PC-9 (cell line): ENCODE measurements at regions of chr2 and their contacts with region 1.

Region 1: GRCh38 chr2:199716807-199717586 is 134.0 kb downstream of the FTCDNL1 start:
- DNase-seq: peak; percentile 43 to 51
- H3K4me3 ChIP-seq: peak overlapping the region; percentile 25; the same call in 1 of the 2 replicates
- H3K27ac ChIP-seq: peak overlapping the region; percentile 72
- H3K4me1 ChIP-seq: peaks cover 19% of the 10 kb centered on the region
- H3K27me3 ChIP-seq: no peaks in the 10 kb centered on the region
- CTCF ChIP-seq: no peak

Region 2: DNA sequence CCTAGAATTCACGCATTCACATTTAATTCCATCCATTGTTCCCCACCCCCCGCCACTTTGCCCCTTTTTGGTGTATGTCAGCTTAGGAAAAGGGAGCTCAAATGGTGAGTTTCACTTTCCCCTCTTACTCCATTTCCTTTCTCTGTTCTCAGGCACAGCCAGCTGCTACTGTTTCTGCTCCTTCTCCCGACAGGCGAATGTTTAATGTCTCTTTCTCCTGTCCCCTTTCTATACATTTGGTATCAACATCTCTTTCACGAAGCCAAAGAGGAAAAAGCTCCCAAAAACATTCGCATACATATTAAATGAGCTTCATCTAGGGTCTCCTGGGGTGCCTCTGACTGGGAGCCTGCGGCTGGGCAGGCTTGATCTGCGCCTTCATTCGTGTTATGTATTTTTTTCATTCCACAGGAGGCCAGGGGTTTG is 135.0 kb before region 1 on chr2:
- CTCF ChIA-PET with region 1: no interaction called
- POLR2A ChIA-PET with region 1: no interaction called
- intact Hi-C with region 1: no loop called
- DNase-seq: no peak
- H3K4me3 ChIP-seq: no peak overlapping the region
- H3K27ac ChIP-seq: no peak overlapping the region
- H3K4me1 ChIP-seq: no peaks in the 10 kb centered on the region
- H3K27me3 ChIP-seq: peaks cover 23% of the 10 kb centered on the region
- CTCF ChIP-seq: no peak

Region 3: GRCh38 chr2:199618806-199619205 is 98.2 kb before region 1 on chr2:
- CTCF ChIA-PET with region 1: no interaction called
- POLR2A ChIA-PET with region 1: no interaction called
- intact Hi-C with region 1: no loop called
- DNase-seq: no peak
- H3K4me3 ChIP-seq: no peak overlapping the region
- H3K27ac ChIP-seq: no peak overlapping the region
- H3K4me1 ChIP-seq: no peaks in the 10 kb centered on the region
- H3K27me3 ChIP-seq: no peaks in the 10 kb centered on the region
- CTCF ChIP-seq: no peak

Region 4: GRCh38 chr2:199693861-199694260 is 23.1 kb before region 1 on chr2:
- CTCF ChIA-PET with region 1: no interaction called
- POLR2A ChIA-PET with region 1: no interaction called
- intact Hi-C with region 1: no loop called
- DNase-seq: no peak
- H3K4me3 ChIP-seq: no peak overlapping the region
- H3K27ac ChIP-seq: no peak overlapping the region
- H3K4me1 ChIP-seq: no peaks in the 10 kb centered on the region
- H3K27me3 ChIP-seq: no peaks in the 10 kb centered on the region
- CTCF ChIP-seq: no peak

Region 5: GRCh38 chr2:199850718-199851500 is 133.9 kb after region 1 on chr2 and contains the start of gene FTCDNL1:
- CTCF ChIA-PET with region 1: no interaction called
- POLR2A ChIA-PET with region 1: no interaction called
- intact Hi-C with region 1: loop called (anchors 5 kb)
- DNase-seq: peak; percentile 40 to 70
- H3K4me3 ChIP-seq: peak within 1 kb of the TSS; percentile 59
- H3K27ac ChIP-seq: no peak within 1 kb of the TSS
- H3K4me1 ChIP-seq: no peaks in the 10 kb centered on the region
- H3K27me3 ChIP-seq: no peaks in the 10 kb centered on the region
- CTCF ChIP-seq: peak; percentile 67
- total RNA-seq, gene FTCDNL1: 2.7 and 5.2 TPM in 2 replicates